ENCODE measurements at regions of chr10 and their contacts with region 1.

Region 1: GRCh38 chr10:58531084-58531695 is 18.5 kb downstream of the BICC1 start:
- DNase-seq: peak; percentile 57
- ATAC-seq: peak; percentile 94
- H3K4me3 ChIP-seq: no peak overlapping the region
- H3K27ac ChIP-seq: no peak overlapping the region
- H3K4me1 ChIP-seq: no peaks in the 10 kb centered on the region
- H3K27me3 ChIP-seq: no peaks in the 10 kb centered on the region
- CTCF ChIP-seq: peak; percentile 54 to 80 (median 80); a peak in 5 of 6 replicates
- POLR2A ChIP-seq: no peak
- RAD21 ChIP-seq: peak; percentile 73

Region 2: GRCh38 chr10:58299580-58299979 is 231.6 kb before region 1 on chr10:
- CTCF ChIA-PET with region 1: interaction called, 4 read pairs
- POLR2A ChIA-PET with region 1: no interaction called
- RAD21 ChIA-PET with region 1: no interaction called
- intact Hi-C with region 1: loop called (anchors 5 kb)
- DNase-seq: peak; percentile 38
- ATAC-seq: peak; percentile 96
- H3K4me3 ChIP-seq: no peak overlapping the region
- H3K27ac ChIP-seq: no peak overlapping the region
- H3K4me1 ChIP-seq: no peaks in the 10 kb centered on the region
- H3K27me3 ChIP-seq: peaks cover 14% of the 10 kb centered on the region; the same call in 1 of the 2 replicates
- CTCF ChIP-seq: peak; percentile 65 to 95 (median 87); a peak in 5 of 6 replicates
- POLR2A ChIP-seq: no peak
- RAD21 ChIP-seq: peak; percentile 78

Region 3: GRCh38 chr10:58350619-58351323 is 180.4 kb before region 1 on chr10:
- CTCF ChIA-PET with region 1: no interaction called
- POLR2A ChIA-PET with region 1: no interaction called
- RAD21 ChIA-PET with region 1: no interaction called
- intact Hi-C with region 1: no loop called
- DNase-seq: no peak
- ATAC-seq: no peak
- H3K4me3 ChIP-seq: no peak overlapping the region
- H3K27ac ChIP-seq: no peak overlapping the region
- H3K4me1 ChIP-seq: no peaks in the 10 kb centered on the region
- H3K27me3 ChIP-seq: no peaks in the 10 kb centered on the region
- CTCF ChIP-seq: no peak
- POLR2A ChIP-seq: no peak
- RAD21 ChIP-seq: no peak

Region 4: GRCh38 chr10:58404001-58404400 is 127.2 kb before region 1 on chr10:
- CTCF ChIA-PET with region 1: no interaction called
- POLR2A ChIA-PET with region 1: no interaction called
- RAD21 ChIA-PET with region 1: no interaction called
- intact Hi-C with region 1: no loop called
- DNase-seq: no peak
- ATAC-seq: no peak
- H3K4me3 ChIP-seq: no peak overlapping the region
- H3K27ac ChIP-seq: no peak overlapping the region
- H3K4me1 ChIP-seq: no peaks in the 10 kb centered on the region
- H3K27me3 ChIP-seq: no peaks in the 10 kb centered on the region
- CTCF ChIP-seq: no peak
- POLR2A ChIP-seq: no peak
- RAD21 ChIP-seq: no peak

Region 5: GRCh38 chr10:58414270-58415041 is 116.7 kb before region 1 on chr10:
- CTCF ChIA-PET with region 1: interaction called, 26 read pairs
- POLR2A ChIA-PET with region 1: no interaction called
- RAD21 ChIA-PET with region 1: interaction called, 3 to 6 read pairs
- intact Hi-C with region 1: loop called (anchors 5 kb)
- DNase-seq: no peak
- ATAC-seq: peak; percentile 83
- H3K4me3 ChIP-seq: no peak overlapping the region
- H3K27ac ChIP-seq: no peak overlapping the region
- H3K4me1 ChIP-seq: no peaks in the 10 kb centered on the region
- H3K27me3 ChIP-seq: no peaks in the 10 kb centered on the region
- CTCF ChIP-seq: peak; percentile 38 to 50 (median 41); a peak in 5 of 6 replicates
- POLR2A ChIP-seq: no peak
- RAD21 ChIP-seq: peak; percentile 79

Region 6: GRCh38 chr10:58577437-58577777 is 46.2 kb after region 1 on chr10:
- CTCF ChIA-PET with region 1: no interaction called
- POLR2A ChIA-PET with region 1: no interaction called
- RAD21 ChIA-PET with region 1: no interaction called
- intact Hi-C with region 1: loop called (anchors 5 kb)
- DNase-seq: no peak
- ATAC-seq: no peak
- H3K4me3 ChIP-seq: no peak overlapping the region
- H3K27ac ChIP-seq: no peak overlapping the region
- H3K4me1 ChIP-seq: no peaks in the 10 kb centered on the region
- H3K27me3 ChIP-seq: peaks cover 28% of the 10 kb centered on the region
- CTCF ChIP-seq: no peak
- POLR2A ChIP-seq: no peak
- RAD21 ChIP-seq: no peak

Region 7: DNA sequence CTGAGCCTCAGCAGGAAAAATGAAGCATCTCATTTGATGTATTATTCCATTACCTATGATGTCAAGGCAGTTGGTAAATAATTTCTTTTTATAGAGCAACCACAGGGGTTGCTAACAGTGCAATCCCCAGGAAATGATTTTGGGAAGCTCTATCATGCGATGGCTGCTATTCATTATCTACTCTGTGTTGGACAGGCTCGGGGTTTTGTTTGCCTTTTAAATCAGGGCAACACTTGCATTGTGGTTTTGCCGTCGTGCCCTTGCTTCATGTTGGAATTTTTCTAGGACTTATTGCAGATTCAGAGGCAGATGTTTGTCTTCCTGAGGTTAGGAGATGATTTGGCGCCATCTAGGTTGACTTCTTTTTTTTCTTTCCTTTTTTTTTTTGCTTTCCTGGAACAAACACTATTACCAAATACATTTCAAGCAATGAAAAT is 109.9 kb after region 1 on chr10:
- CTCF ChIA-PET with region 1: interaction called, 21 read pairs
- POLR2A ChIA-PET with region 1: no interaction called
- RAD21 ChIA-PET with region 1: interaction called in 1 of 2 experiments, 4 read pairs
- intact Hi-C with region 1: loop called (anchors 1 kb)
- DNase-seq: peak; percentile 18
- ATAC-seq: peak; percentile 32; the same call in 1 of the 2 replicates
- H3K4me3 ChIP-seq: no peak overlapping the region
- H3K27ac ChIP-seq: no peak overlapping the region
- H3K4me1 ChIP-seq: no peaks in the 10 kb centered on the region
- H3K27me3 ChIP-seq: peaks cover 13% of the 10 kb centered on the region; the same call in 1 of the 2 replicates
- CTCF ChIP-seq: peak in 2 of 3 experiments; percentile 29 to 42; a peak in 4 of 6 replicates
- POLR2A ChIP-seq: no peak
- RAD21 ChIP-seq: peak; percentile 56

Region 8: GRCh38 chr10:58743466-58744115 is 212.4 kb after region 1 on chr10:
- CTCF ChIA-PET with region 1: no interaction called
- POLR2A ChIA-PET with region 1: no interaction called
- RAD21 ChIA-PET with region 1: no interaction called
- intact Hi-C with region 1: loop called (anchors 5 kb)
- DNase-seq: no peak
- ATAC-seq: no peak
- H3K4me3 ChIP-seq: no peak overlapping the region
- H3K27ac ChIP-seq: no peak overlapping the region
- H3K4me1 ChIP-seq: no peaks in the 10 kb centered on the region
- H3K27me3 ChIP-seq: no peaks in the 10 kb centered on the region
- CTCF ChIP-seq: no peak
- POLR2A ChIP-seq: no peak
- RAD21 ChIP-seq: no peak

Region 9: DNA sequence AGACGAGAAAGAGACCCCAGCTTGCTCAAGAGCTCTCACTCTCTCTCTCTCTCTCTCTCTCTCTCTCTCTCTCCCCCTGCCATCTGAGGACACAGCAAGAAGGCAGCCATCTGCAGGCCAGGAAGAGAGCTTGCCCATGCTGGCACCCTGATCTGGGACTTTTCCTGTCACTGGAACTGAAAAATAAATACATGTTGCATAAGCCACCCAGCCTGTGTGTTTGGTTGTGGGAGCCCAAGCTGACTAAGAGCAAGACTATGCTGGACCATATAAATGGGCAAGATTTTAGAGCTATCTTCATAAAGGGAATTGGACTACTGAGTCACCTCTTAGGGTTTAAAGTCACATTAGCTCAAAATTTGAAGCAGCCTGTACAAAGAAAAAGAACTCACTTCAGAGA is 1079.9 kb after region 1 on chr10:
- CTCF ChIA-PET with region 1: no interaction called
- POLR2A ChIA-PET with region 1: no interaction called
- RAD21 ChIA-PET with region 1: no interaction called
- intact Hi-C with region 1: loop called (anchors 10 kb)
- DNase-seq: no peak
- ATAC-seq: no peak
- H3K4me3 ChIP-seq: no peak overlapping the region
- H3K27ac ChIP-seq: no peak overlapping the region
- H3K4me1 ChIP-seq: no peaks in the 10 kb centered on the region
- H3K27me3 ChIP-seq: no peaks in the 10 kb centered on the region
- CTCF ChIP-seq: no peak
- POLR2A ChIP-seq: no peak
- RAD21 ChIP-seq: no peak